HEK293T (cell line): ENCODE measurements at regions of chr11 and their contacts with region 1.

Region 1: DNA sequence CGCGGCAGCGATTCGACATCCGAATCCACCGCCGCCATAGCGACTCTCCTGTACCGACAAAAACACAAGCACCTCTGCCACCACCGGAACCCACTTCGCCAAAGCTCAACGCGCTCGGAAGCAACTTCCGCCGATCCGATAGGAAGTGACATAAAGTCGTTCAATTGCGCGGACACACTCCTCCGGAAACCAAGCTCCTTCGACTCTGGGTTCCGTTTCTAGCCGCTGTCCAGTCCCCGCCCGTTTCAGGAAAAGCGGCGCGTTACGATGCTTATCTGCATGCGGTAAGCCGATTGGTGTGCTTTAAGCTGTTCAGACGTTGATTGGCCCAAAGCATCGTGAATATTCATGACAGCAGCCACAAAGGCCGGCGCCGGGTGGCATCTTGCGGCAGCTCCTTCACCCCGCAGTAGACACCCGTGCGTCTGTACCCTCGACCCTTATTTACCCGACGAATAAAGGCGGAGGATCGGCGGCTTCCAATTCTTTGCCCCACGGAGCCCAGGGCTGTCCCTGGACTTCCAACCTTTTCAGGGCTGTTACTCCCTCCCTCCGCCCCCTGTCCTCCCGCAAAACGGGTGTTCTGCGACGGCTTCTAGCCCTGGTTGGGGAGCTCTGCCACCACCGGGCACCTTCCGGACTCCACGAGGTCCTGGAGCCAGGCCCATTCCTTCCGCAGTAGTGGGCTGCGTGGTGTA is at the start of gene TUT1:
- DNase-seq: peak; percentile 87

Region 2: DNA sequence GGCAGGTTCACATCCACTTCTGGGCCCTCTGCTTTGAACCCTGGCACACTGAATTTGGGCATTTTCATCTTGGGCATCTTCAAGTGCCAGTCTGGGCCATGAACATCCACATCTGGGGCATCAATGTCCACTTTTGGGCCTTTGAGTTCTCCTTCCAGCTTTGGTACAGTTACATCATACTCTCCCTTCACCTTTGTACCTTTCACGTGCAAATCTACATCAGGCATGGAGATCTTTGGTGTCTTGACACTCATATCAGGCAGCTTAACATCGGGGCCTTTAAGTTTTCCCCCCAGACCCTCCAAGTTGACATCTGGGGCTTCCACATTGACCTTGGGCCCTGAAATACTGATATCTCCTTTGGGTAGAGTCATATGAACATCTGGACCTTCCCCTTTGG is 59.5 kb before region 1 on chr11:
- CTCF ChIA-PET with region 1: no interaction called
- POLR2A ChIA-PET with region 1: no interaction called
- DNase-seq: no peak

Region 3: GRCh38 chr11:62542750-62543567 is 48.6 kb before region 1 on chr11:
- CTCF ChIA-PET with region 1: interaction called, 3 read pairs
- POLR2A ChIA-PET with region 1: interaction called, 21 read pairs
- DNase-seq: peak; percentile 85

Region 4: GRCh38 chr11:62612366-62613290 is 21.0 kb after region 1 on chr11 and contains the starts of genes EML3 and ROM1:
- CTCF ChIA-PET with region 1: interaction called, 16 read pairs
- POLR2A ChIA-PET with region 1: interaction called, 21 read pairs
- DNase-seq: peak; percentile 76

Region 5: DNA sequence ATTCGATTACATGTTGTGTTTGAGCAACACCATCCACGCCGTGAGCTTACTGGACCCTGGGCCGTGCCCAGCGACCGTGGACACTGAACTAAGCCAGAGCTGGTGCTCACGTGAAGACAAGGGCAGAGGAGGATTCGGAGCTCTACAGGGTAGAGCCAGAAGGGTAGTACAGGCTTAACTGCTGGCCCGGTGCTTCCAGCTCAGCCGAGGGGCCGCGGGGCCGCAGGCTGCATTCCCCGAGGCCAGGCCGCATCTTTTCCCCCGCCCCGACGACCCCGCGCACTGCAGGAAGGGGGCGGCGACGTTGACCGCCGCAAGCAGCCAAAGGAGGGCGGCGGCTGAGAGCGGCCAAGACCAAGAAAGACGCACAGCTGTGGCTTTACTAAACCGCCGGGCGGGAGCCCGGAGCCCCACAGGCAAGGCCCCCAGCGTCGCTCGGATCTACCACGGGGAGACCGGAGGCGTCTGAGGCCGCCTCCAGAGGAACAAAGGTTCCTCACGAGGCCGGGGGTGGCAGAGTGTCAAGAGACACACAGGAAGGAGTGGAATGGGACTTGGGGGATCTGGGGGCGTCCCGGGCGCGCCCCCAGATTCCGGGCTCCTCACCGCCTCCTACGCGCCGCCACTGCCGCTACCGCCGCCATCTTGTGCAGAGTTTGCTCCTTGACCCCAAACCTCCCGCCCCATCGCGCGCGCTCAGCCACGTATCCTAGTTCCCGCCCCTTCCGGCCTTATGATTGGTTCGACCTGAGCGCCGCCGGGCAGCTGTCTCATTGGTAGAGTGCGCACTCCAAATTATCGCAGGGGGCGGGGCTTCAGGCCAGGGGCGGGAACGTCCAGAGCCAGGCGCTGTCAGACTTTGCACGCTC is 54.6 kb after region 1 on chr11 and contains the start of gene GANAB:
- CTCF ChIA-PET with region 1: no interaction called
- POLR2A ChIA-PET with region 1: interaction called, 19 read pairs
- DNase-seq: peak; percentile 99

Region 6: GRCh38 chr11:62665075-62665598 is 73.5 kb after region 1 on chr11 and contains the starts of genes C11orf98 and CSKMT:
- CTCF ChIA-PET with region 1: no interaction called
- POLR2A ChIA-PET with region 1: interaction called, 40 read pairs
- DNase-seq: peak; percentile 94

Region 7: DNA sequence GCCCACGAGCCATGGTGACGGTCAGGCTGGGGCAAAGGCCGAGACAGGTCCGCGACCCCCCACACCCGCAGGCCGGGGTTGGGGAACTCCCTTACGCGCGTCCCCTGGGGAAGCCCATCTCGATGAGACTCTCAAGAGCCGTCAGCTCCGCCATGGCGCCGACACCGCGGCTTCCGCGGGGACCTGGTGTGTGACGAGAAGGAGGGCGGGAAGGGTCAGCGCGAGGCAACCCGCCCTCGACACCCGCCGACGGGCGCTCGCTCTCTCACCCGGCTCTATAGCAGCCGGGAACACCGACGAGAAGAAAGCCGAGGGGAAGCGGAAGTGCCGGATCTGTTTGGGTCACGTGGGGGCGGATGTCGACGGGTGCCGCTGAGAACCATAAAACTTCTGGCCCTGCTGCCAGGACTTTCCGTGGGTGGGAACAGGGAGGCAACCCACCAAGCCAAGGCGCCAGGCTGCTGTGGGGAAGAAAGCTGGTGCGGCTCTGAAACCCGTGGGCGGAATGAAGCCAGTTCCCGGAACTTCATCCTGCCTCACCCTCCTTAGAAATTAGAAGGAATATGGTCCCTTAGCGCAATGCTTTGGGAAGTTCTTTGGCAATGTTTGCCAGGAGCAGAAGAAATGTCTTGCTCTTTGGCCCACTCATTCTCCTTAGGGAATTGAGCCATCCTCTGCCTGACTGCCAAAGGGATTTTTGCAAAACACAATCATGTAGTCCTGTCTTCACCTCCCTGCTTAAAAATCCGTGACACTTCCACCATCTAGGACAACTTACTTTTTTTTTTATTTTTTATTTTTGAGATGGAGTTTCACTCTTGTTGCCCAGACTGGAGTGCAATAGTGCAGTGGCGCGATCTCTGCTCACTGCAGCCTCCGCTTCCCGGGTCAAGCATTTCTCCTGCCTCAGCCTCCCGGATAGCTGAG is 87.4 kb after region 1 on chr11 and contains the start of gene UBXN1:
- CTCF ChIA-PET with region 1: interaction called, 3 read pairs
- POLR2A ChIA-PET with region 1: interaction called, 13 read pairs
- DNase-seq: peak; percentile 84

Region 8: DNA sequence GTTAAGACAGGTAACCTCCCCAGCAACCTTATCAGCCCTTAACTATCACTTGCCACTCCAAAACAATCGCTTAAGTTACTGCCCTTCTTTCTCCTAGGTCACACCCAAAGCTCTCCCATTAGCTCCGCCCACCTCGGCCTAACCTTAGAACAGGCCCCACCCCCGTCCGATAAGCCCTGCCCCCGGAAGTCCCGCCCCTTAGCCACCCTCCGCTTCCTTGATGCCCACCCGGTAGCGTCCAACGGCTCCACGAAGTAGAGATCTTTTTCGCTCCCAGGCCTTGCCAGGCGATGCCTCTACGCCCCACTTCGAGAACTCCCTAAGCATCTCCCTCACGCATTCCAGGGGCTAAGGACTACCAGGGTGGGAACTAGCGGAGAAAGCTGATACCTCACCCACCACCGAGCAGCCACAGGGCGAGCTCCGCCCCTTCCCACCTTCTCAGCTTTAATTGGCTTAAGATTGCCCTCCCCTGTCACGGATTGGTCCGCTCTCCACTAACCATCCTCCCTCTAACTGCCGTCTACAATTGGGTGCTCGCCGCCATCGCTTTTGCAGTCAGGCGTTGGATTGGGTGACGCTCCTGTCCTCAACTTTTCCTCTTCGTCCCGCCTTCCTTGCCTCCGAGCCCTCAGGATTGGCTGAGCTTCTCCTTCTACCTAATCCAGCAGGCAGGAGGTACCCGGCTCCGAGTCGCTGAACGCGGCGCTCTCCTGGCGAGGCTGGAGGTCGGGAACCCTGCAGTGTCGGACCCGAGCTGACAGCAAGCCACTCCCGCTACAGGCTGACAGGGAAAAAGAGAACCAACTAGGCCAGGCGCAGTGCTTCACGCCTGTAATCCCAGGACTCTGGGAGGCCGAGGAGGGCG is 162.4 kb after region 1 on chr11 and contains the start of gene ZBTB3:
- CTCF ChIA-PET with region 1: no interaction called
- POLR2A ChIA-PET with region 1: interaction called, 17 read pairs
- DNase-seq: peak; percentile 94